WTC11 (cell line): ENCODE measurements at regions of chr16 and their contacts with region 1.

Region 1: DNA sequence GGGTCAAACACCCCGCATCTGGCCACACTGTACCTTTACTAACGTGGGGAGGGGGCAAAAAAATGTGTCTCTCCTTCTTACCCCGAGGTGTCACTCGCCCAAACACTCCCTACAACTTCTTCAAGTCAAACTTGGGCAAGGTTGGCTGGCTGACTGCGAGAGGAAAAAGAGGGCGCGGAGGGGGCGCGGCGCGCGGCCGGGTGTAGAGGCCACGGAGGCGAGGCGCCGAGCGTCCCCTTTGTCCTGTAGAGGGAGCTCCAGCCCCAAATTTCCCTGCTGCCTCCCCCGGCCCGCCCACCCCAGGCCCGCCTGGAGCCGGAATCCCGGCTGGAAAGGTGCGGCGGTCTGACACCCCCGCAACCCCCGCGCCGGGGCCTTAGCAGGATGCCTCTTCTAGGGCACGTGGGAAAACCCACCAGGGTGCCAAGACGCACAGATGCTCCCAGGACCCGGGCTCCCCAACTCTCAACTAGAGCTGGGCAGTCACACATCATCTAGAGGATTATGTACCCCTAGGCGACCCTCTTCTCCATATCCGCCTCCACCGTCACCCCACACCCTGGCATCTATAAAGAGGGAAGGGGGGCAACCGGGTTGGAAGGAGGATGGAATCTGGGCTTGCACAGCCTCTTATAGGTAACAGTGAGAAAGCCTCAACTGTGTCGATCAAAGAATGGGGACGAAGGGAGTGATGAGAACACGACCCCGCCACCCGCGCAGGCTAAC is 4.2 kb downstream of the IRX3 start:
- DNase-seq: peak; percentile 79
- ATAC-seq: peak; percentile 7
- H3K4me3 Mint-ChIP-seq: peak overlapping the region; percentile 72
- H3K27ac Mint-ChIP-seq: no peak overlapping the region
- H3K4me1 Mint-ChIP-seq: peaks cover 37% of the 10 kb centered on the region
- H3K27me3 Mint-ChIP-seq: peaks cover 90% of the 10 kb centered on the region
- CTCF ChIP-seq: peak; percentile 50; the same call in 1 of the 2 replicates

Region 2: DNA sequence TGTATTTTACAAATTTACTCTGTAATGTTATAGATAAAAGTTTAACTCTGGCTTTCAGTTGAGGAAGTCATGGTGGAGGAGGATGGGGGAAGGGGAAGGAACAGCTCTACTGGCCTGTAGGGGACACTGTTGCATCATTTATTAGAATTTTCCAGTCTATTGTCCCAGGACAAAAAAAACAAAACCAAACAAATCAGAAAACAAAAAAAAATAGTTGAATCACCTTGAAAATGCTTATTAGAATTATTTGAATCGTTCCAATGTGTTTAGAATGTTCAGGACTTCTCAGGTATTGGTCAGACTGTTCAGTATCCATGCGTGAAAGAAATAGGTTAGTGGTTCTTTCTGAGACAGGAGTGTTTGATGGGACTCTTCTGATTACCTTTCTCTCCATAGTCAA is 336.4 kb before region 1 on chr16:
- CTCF ChIA-PET with region 1: interaction called, 12 read pairs
- POLR2A ChIA-PET with region 1: no interaction called
- DNase-seq: no peak
- ATAC-seq: peak; percentile 58; the same call in 1 of the 2 replicates
- H3K4me3 Mint-ChIP-seq: no peak overlapping the region
- H3K27ac Mint-ChIP-seq: no peak overlapping the region
- H3K4me1 Mint-ChIP-seq: 0 out of 2 replicates have a peak, but pooled peaks cover 6% of the 10 kb centered on the region
- H3K27me3 Mint-ChIP-seq: no peaks in the 10 kb centered on the region
- CTCF ChIP-seq: peak; percentile 60; the same call in 1 of the 2 replicates

Region 3: GRCh38 chr16:54929090-54930004 is 647.0 kb after region 1 on chr16:
- CTCF ChIA-PET with region 1: interaction called, 11 read pairs
- POLR2A ChIA-PET with region 1: interaction called, 3 read pairs
- DNase-seq: peak; percentile 100
- ATAC-seq: peak; percentile 89
- H3K4me3 Mint-ChIP-seq: peak overlapping the region; percentile 97
- H3K27ac Mint-ChIP-seq: peak overlapping the region; percentile 53; the same call in 1 of the 2 replicates
- H3K4me1 Mint-ChIP-seq: peaks cover 32% of the 10 kb centered on the region
- H3K27me3 Mint-ChIP-seq: peaks cover 85% of the 10 kb centered on the region
- CTCF ChIP-seq: no peak